MCF 10A (cell line): ENCODE measurements at regions of chr2 and their contacts with region 1.

Region 1: GRCh38 chr2:190534310-190535120 is at the start of gene NEMP2:
- DNase-seq: peak; percentile 77
- H3K4me3 Mint-ChIP-seq: peak within 1 kb of the TSS; percentile 80
- H3K27ac Mint-ChIP-seq: peak within 1 kb of the TSS; percentile 98
- H3K4me1 Mint-ChIP-seq: peaks cover 37% of the 10 kb centered on the region
- H3K27me3 Mint-ChIP-seq: no peaks in the 10 kb centered on the region
- CTCF ChIP-seq: no peak
- total RNA-seq, gene NEMP2: 34.2 and 46.0 TPM in 2 replicates

Region 2: DNA sequence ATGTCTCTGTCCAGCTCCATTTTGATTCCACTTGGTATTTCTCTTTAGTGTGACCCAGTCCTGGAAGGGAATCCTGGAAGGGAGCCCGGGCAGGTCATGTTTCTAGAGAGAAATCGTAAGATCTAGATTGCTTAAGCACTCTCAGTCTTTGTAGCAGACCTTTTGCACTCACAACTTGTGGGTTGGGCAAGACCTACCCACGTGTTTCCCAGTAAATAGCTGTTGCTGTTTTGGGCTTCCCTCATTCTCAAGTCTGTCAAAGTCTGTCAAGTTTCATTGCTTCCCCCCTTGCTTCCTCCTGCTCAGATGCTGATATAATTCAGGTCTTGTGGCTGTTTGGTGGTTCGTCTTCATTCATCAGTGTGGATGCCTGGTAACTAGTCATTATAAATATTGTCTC is 17.4 kb after region 1 on chr2:
- CTCF ChIA-PET with region 1: interaction called, 3 read pairs
- POLR2A ChIA-PET with region 1: interaction called, 25 read pairs
- intact Hi-C with region 1: no loop called
- DNase-seq: peak; percentile 90
- H3K4me3 Mint-ChIP-seq: no peak overlapping the region
- H3K27ac Mint-ChIP-seq: peak overlapping the region; percentile 95
- H3K4me1 Mint-ChIP-seq: peaks cover 27% of the 10 kb centered on the region
- H3K27me3 Mint-ChIP-seq: no peaks in the 10 kb centered on the region
- CTCF ChIP-seq: no peak

Region 3: DNA sequence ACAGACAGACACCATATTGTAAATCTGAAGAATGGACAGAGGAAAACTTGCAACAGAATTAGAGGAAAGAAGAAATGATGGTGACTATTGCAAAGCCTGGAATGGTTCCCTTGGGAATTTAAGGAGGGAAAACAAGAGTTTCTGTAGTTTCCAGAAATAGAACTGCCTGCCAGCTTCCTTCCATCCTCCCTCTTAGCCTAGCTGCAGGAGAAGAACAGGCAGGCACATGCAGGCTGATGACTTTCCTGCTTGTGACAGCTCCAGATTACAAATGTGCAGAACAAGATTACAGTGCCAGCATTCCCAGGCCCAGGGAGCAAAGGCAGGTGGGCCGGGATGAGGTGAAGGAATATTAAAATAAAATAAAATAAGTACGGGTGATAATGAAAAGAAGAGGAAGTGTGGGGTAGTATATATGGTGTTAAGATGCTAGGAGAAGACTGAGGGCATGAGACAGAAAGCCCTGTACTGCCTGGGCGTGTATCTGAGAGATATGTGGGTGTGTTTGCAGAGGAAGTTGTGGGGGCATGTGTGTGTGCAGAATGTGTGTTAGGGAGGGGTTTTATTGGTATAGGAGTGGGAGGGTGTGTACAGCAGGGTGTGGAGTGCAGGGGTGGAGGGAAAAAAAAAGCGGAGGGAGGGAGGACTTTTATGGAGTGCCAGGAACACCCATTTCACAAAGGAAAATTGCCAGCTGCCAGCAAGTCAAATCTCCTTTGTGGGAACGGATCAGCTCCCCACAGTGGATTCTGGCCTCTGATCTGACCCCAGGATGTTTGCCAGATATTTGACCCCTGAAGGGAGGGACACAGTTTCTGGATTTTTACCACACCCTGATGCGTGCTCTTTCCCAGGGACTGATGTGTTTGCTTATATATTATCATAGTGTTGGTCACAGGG is 43.9 kb after region 1 on chr2:
- CTCF ChIA-PET with region 1: interaction called, 4 read pairs
- POLR2A ChIA-PET with region 1: interaction called, 33 read pairs
- intact Hi-C with region 1: loop called (anchors 2 kb)
- DNase-seq: peak; percentile 95
- H3K4me3 Mint-ChIP-seq: peak overlapping the region; percentile 60
- H3K27ac Mint-ChIP-seq: peak overlapping the region; percentile 81
- H3K4me1 Mint-ChIP-seq: peaks cover 53% of the 10 kb centered on the region
- H3K27me3 Mint-ChIP-seq: no peaks in the 10 kb centered on the region
- CTCF ChIP-seq: no peak

Region 4: GRCh38 chr2:190636373-190636772 is 101.9 kb after region 1 on chr2:
- CTCF ChIA-PET with region 1: interaction called, 3 read pairs
- POLR2A ChIA-PET with region 1: interaction called, 23 read pairs
- intact Hi-C with region 1: no loop called
- DNase-seq: peak; percentile 83
- H3K4me3 Mint-ChIP-seq: no peak overlapping the region
- H3K27ac Mint-ChIP-seq: peak overlapping the region; percentile 80
- H3K4me1 Mint-ChIP-seq: peaks cover 50% of the 10 kb centered on the region
- H3K27me3 Mint-ChIP-seq: no peaks in the 10 kb centered on the region
- CTCF ChIP-seq: no peak